Naive thymus-derived CD4-positive, alpha-beta T cell (primary cell): ENCODE measurements at regions of chr17 and their contacts with region 1.

Region 1: DNA sequence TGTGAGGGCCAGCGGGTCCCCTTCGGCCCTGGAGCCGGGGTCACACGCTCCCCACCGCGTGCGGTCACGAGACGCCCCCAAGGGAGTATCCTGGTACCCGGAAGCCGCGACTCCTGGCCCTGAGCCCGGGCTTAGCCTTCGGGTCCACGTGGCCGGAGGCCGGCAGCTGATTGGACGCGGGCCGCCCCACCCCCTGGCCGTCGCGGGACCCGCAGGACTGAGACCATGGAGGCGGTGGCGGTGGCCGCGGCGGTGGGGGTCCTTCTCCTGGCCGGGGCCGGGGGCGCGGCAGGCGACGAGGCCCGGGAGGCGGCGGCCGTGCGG is at the start of gene NAGLU:
- DNase-seq: peak; percentile 56 to 93 (median 69)
- ATAC-seq: peak; percentile 91
- H3K4me3 ChIP-seq: peak within 1 kb of the TSS; percentile 71
- H3K4me3 Mint-ChIP-seq: peak within 1 kb of the TSS; percentile 75 to 96 (median 86)
- H3K27ac ChIP-seq: peak within 1 kb of the TSS; percentile 57
- H3K27ac Mint-ChIP-seq: peak within 1 kb of the TSS; percentile 36 to 92 (median 79)
- H3K4me1 ChIP-seq: peaks cover 14 to 24% of the 10 kb centered on the region in 2 donors
- H3K4me1 Mint-ChIP-seq: peaks cover 29 to 50% (median 42%) of the 10 kb centered on the region in 7 donors
- H3K27me3 ChIP-seq: no peaks in the 10 kb centered on the region
- H3K27me3 Mint-ChIP-seq: peaks cover 0 to 9% (median 0%) of the 10 kb centered on the region in 5 donors
- total RNA-seq, gene NAGLU: 18.0 to 27.1 (median 22.3) TPM

Region 2: GRCh38 chr17:42193969-42194899 is 341.8 kb before region 1 on chr17 and contains the start of gene GHDC:
- CTCF ChIA-PET with region 1: no interaction called
- POLR2A ChIA-PET with region 1: no interaction called
- intact Hi-C with region 1: loop called in 1 of 2 experiments (anchors 10 kb)
- DNase-seq: peak; percentile 48 to 83 (median 75)
- ATAC-seq: peak; percentile 94
- H3K4me3 ChIP-seq: peak within 1 kb of the TSS; percentile 98
- H3K4me3 Mint-ChIP-seq: peak within 1 kb of the TSS; percentile 93 to 99 (median 95)
- H3K27ac ChIP-seq: peak within 1 kb of the TSS; percentile 82
- H3K27ac Mint-ChIP-seq: peak within 1 kb of the TSS; percentile 86 to 94 (median 90)
- H3K4me1 ChIP-seq: peaks cover 4 to 19% of the 10 kb centered on the region in 2 donors
- H3K4me1 Mint-ChIP-seq: peaks cover 13 to 33% (median 23%) of the 10 kb centered on the region in 7 donors
- H3K27me3 ChIP-seq: no peaks in the 10 kb centered on the region
- H3K27me3 Mint-ChIP-seq: no peaks in the 10 kb centered on the region
- total RNA-seq, gene GHDC: 15.5 to 29.8 (median 19.9) TPM

Region 3: GRCh38 chr17:42548070-42548837 is 12.2 kb after region 1 on chr17:
- CTCF ChIA-PET with region 1: interaction called, 4 read pairs
- POLR2A ChIA-PET with region 1: interaction called, 19 read pairs
- intact Hi-C with region 1: no loop called
- DNase-seq: peak; percentile 54 to 75 (median 70)
- ATAC-seq: peak; percentile 94
- H3K4me3 ChIP-seq: peak overlapping the region; percentile 17
- H3K4me3 Mint-ChIP-seq: peak overlapping the region; percentile 7 to 75 (median 56)
- H3K27ac ChIP-seq: no peak overlapping the region
- H3K27ac Mint-ChIP-seq: peak overlapping the region in 2 of 9 donors; percentile 15 to 48
- H3K4me1 ChIP-seq: no peaks in the 10 kb centered on the region
- H3K4me1 Mint-ChIP-seq: peaks cover 4 to 22% (median 18%) of the 10 kb centered on the region in 7 donors
- H3K27me3 ChIP-seq: no peaks in the 10 kb centered on the region
- H3K27me3 Mint-ChIP-seq: no peaks in the 10 kb centered on the region

Region 4: GRCh38 chr17:42554250-42555121 is 18.5 kb after region 1 on chr17:
- CTCF ChIA-PET with region 1: no interaction called
- POLR2A ChIA-PET with region 1: interaction called, 19 read pairs
- intact Hi-C with region 1: loop called (anchors 1 to 2 kb)
- DNase-seq: peak; percentile 47 to 84 (median 68)
- ATAC-seq: peak; percentile 90
- H3K4me3 ChIP-seq: peak overlapping the region; percentile 80
- H3K4me3 Mint-ChIP-seq: peak overlapping the region; percentile 84 to 95 (median 90)
- H3K27ac ChIP-seq: peak overlapping the region; percentile 86
- H3K27ac Mint-ChIP-seq: peak overlapping the region; percentile 80 to 94 (median 91)
- H3K4me1 ChIP-seq: peaks cover 14 to 15% of the 10 kb centered on the region in 2 donors
- H3K4me1 Mint-ChIP-seq: peaks cover 8 to 44% (median 25%) of the 10 kb centered on the region in 7 donors
- H3K27me3 ChIP-seq: no peaks in the 10 kb centered on the region
- H3K27me3 Mint-ChIP-seq: no peaks in the 10 kb centered on the region

Region 5: DNA sequence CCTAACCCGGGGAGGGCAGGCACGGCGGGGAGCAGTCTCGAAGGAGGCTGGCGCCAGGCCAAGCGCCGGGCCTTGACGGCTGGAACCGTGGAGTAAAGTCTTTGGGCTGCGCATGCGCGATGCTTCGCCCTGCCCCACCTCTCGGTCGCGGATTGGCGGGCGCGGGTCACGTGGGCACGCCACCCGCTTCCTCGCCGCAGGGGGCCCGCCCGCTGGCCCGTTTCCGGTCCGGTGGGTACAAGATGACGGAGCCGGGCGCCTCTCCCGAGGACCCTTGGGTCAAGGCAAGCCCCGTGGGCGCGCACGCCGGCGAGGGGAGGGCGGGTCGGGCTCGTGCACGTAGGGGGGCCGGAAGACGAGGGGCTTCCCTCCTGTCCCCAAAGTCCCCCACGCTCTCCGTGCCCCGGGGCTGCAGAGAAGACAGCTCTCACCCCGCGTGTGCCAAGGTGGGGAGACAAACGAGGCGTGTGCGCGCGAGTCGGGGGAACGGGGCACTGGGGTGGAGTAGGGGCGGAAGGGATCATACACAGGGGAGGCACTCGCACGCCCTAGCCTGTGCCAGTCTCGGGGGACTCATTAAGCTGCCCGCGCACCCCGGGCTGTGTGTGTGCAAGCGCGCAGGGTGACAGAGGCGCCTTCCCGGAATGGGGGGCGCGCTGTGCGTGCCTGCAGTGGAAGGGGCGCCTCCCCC is 31.0 kb after region 1 on chr17 and contains the start of gene MLX:
- CTCF ChIA-PET with region 1: no interaction called
- POLR2A ChIA-PET with region 1: interaction called, 19 read pairs
- intact Hi-C with region 1: loop called in 1 of 2 experiments (anchors 1 kb)
- DNase-seq: peak; percentile 86 to 96 (median 90)
- ATAC-seq: peak; percentile 80
- H3K4me3 ChIP-seq: peak within 1 kb of the TSS; percentile 76
- H3K4me3 Mint-ChIP-seq: peak within 1 kb of the TSS; percentile 80 to 98 (median 95)
- H3K27ac ChIP-seq: peak within 1 kb of the TSS; percentile 92
- H3K27ac Mint-ChIP-seq: peak within 1 kb of the TSS; percentile 87 to 98 (median 95)
- H3K4me1 ChIP-seq: peaks cover 26 to 27% of the 10 kb centered on the region in 2 donors
- H3K4me1 Mint-ChIP-seq: peaks cover 26 to 57% (median 45%) of the 10 kb centered on the region in 7 donors
- H3K27me3 ChIP-seq: no peaks in the 10 kb centered on the region
- H3K27me3 Mint-ChIP-seq: no peaks in the 10 kb centered on the region
- total RNA-seq, gene MLX: 35.3 to 73.9 (median 65.1) TPM